GM10248 (cell line): ENCODE measurements at regions of chr20 and their contacts with region 1.

Region 1: GRCh38 chr20:3798908-3799248 is 2.8 kb downstream of the CDC25B start:
- DNase-seq: no peak
- CTCF ChIP-seq: no peak

Region 2: GRCh38 chr20:3606021-3606420 is 192.9 kb before region 1 on chr20:
- CTCF ChIA-PET with region 1: no interaction called
- POLR2A ChIA-PET with region 1: no interaction called
- DNase-seq: no peak
- CTCF ChIP-seq: no peak

Region 3: GRCh38 chr20:3786665-3787323 is 12.1 kb before region 1 on chr20 and contains the start of gene CENPB:
- CTCF ChIA-PET with region 1: interaction called, 14 read pairs
- POLR2A ChIA-PET with region 1: no interaction called
- DNase-seq: peak; percentile 95
- CTCF ChIP-seq: peak; percentile 71

Region 4: GRCh38 chr20:4006640-4007039 is 207.8 kb after region 1 on chr20:
- CTCF ChIA-PET with region 1: no interaction called
- POLR2A ChIA-PET with region 1: interaction called, 10 read pairs
- DNase-seq: no peak
- CTCF ChIP-seq: no peak